Activated naive CD4-positive, alpha-beta T cell treated with anti-CD3 and anti-CD28 coated beads for 36 hours (primary cell): ENCODE measurements at regions of chr9 and their contacts with region 1.

Region 1: GRCh38 chr9:69421908-69422801 is 97.1 kb downstream of the ENTREP1 start:
- DNase-seq: peak; percentile 53
- H3K4me3 Mint-ChIP-seq: no peak overlapping the region
- H3K27ac Mint-ChIP-seq: no peak overlapping the region
- H3K4me1 Mint-ChIP-seq: no peaks in the 10 kb centered on the region
- H3K27me3 Mint-ChIP-seq: peaks cover 2% of the 10 kb centered on the region

Region 2: GRCh38 chr9:69056191-69056815 is 365.9 kb before region 1 on chr9:
- CTCF ChIA-PET with region 1: interaction called, 5 read pairs
- intact Hi-C with region 1: loop called (anchors 10 kb)
- DNase-seq: no peak
- H3K4me3 Mint-ChIP-seq: no peak overlapping the region
- H3K27ac Mint-ChIP-seq: no peak overlapping the region
- H3K4me1 Mint-ChIP-seq: no peaks in the 10 kb centered on the region
- H3K27me3 Mint-ChIP-seq: no peaks in the 10 kb centered on the region

Region 3: DNA sequence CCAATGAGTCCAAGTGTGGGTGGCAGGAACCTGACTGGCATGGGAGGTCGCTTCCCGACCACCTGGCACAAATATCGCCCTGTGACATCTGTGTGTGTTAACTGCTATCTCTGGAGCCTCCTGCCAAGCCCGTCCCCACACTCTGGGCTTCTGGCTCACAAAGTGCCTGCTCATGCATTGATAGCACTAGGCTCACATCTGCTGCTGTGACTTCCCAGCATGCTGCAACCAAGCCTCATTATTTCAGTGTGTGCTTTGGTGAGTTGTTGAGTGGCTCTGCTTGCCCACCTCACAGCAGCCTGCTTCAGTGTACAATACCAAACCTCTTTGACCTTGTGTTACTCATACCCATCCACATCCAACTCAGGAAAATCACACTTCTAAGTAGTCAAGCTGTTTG is 110.2 kb after region 1 on chr9:
- CTCF ChIA-PET with region 1: no interaction called
- intact Hi-C with region 1: no loop called
- DNase-seq: no peak
- H3K4me3 Mint-ChIP-seq: no peak overlapping the region
- H3K27ac Mint-ChIP-seq: no peak overlapping the region
- H3K4me1 Mint-ChIP-seq: no peaks in the 10 kb centered on the region
- H3K27me3 Mint-ChIP-seq: peaks cover 6% of the 10 kb centered on the region

Region 4: DNA sequence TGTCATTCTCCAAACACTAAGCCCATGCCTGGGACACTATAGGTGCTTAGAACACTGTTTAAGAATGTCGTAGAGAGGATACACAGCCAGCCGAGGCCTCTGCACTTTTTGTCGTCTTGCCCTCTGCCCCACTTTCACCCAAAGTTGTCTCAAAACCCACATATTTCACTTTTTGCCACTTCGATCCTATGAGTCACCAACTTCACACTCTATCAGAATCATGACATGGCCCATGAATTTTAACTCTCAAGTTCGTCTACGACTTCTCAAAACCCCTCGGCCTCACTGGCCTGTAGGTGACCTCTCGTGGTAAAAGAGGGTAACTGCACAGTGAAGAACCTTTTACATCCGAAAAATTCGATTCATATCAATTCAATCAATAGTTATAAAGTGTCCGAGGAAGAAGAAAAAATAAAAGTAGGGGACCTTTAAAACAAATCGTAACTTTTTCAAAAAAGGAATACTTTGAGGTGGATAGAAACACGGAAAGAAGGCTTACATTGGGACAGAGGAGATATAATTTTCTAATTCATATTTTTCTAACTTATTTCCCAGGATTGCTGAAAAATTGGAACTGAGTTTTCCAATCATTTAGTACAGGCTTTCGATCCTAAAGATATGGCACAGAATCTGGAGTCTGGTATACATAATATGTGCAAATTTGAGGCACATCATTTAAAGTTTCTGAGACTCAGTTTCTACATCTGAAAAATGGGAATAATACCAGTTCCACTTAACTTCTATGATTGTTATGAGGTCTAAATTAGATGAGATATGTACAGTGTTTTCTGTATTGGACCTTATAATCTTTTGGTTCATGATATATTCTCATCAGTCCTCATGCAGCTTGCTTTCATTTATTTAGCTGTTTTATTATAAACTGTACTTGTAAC is 127.4 kb after region 1 on chr9:
- CTCF ChIA-PET with region 1: interaction called, 77 read pairs
- intact Hi-C with region 1: loop called (anchors 1 kb)
- DNase-seq: peak; percentile 32
- H3K4me3 Mint-ChIP-seq: no peak overlapping the region
- H3K27ac Mint-ChIP-seq: no peak overlapping the region
- H3K4me1 Mint-ChIP-seq: no peaks in the 10 kb centered on the region
- H3K27me3 Mint-ChIP-seq: peaks cover 18% of the 10 kb centered on the region

Region 5: GRCh38 chr9:69590266-69590665 is 168.1 kb after region 1 on chr9:
- CTCF ChIA-PET with region 1: no interaction called
- intact Hi-C with region 1: no loop called
- DNase-seq: no peak
- H3K4me3 Mint-ChIP-seq: no peak overlapping the region
- H3K27ac Mint-ChIP-seq: no peak overlapping the region
- H3K4me1 Mint-ChIP-seq: no peaks in the 10 kb centered on the region
- H3K27me3 Mint-ChIP-seq: peaks cover 2% of the 10 kb centered on the region

Region 6: DNA sequence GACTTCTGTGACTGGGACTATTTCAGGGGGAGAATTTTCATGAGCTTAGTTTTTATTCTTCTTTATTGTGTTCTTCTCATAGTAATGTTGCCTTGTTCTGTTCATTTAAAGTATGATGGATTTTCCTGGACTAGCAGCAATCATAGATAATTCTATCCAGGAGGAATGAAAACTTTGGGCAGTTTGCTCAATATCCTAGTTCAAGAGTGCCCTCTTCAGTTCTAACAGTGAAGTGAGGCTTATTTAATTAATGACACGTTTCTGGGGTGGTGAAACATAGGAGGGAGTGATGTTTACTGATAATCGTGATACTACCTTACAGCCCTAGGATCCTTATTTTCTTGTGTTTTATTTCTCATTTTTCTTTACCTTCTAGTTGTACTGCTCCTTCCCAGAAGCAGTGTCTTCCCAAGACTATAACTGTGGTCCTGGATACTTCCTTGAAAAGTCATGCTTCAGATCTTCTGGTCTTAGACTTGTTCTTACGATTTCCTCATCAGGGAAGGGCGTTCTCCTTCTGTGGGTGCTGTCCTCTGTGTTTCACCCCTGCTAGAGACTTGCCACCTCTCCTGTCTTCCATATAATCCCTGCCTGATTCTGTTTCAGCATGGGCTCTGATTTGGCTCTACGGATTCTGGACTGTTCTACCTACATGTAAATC is 455.8 kb after region 1 on chr9:
- CTCF ChIA-PET with region 1: interaction called, 14 read pairs
- intact Hi-C with region 1: loop called (anchors 1 kb)
- DNase-seq: no peak
- H3K4me3 Mint-ChIP-seq: no peak overlapping the region
- H3K27ac Mint-ChIP-seq: no peak overlapping the region
- H3K4me1 Mint-ChIP-seq: no peaks in the 10 kb centered on the region
- H3K27me3 Mint-ChIP-seq: peaks cover 4% of the 10 kb centered on the region

Region 7: GRCh38 chr9:69919461-69920061 is 497.4 kb after region 1 on chr9:
- CTCF ChIA-PET with region 1: interaction called, 18 read pairs
- intact Hi-C with region 1: loop called (anchors 2 kb)
- DNase-seq: no peak
- H3K4me3 Mint-ChIP-seq: no peak overlapping the region
- H3K27ac Mint-ChIP-seq: no peak overlapping the region
- H3K4me1 Mint-ChIP-seq: no peaks in the 10 kb centered on the region
- H3K27me3 Mint-ChIP-seq: peaks cover 21% of the 10 kb centered on the region

Region 8: DNA sequence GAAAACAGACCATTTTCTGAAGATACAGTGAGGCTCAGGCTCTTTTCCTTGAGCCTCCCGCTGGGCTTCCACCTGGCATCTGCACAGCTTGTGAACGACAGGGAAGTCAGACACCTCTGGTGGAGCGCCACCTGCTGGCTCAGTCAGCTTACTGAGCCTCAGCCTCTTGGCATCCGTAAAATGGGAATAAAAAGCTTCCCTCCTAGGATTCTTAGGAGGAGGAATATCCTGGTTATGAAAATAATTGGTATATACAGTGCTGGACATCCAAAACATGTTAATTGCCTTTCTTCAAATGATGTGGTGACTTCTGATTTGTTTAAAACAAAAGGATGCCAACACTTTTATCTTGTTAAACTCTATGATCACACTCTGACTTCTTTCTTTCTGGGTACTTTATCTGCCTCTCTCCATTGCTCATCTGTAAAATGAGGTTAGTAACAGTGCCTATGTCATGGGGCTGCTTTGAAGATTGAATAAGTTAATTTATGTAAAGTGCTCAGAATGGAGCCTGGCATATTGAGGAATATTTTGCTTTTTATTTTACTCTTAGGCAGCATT is 689.0 kb after region 1 on chr9:
- CTCF ChIA-PET with region 1: interaction called, 7 read pairs
- intact Hi-C with region 1: loop called (anchors 2 kb)
- DNase-seq: peak; percentile 76
- H3K4me3 Mint-ChIP-seq: peak overlapping the region; percentile 22
- H3K27ac Mint-ChIP-seq: no peak overlapping the region
- H3K4me1 Mint-ChIP-seq: peaks cover 9% of the 10 kb centered on the region
- H3K27me3 Mint-ChIP-seq: peaks cover 3% of the 10 kb centered on the region